H1 (cell line): ENCODE measurements at regions of chr10 and their contacts with region 1.

Region 1: GRCh38 chr10:22573820-22574569 is 140.4 kb downstream of the PIP4K2A start:
- DNase-seq: peak in 1 of 2 experiments; percentile 41
- H3K4me3 ChIP-seq: no peak overlapping the region
- H3K27ac ChIP-seq: no peak overlapping the region
- H3K4me1 ChIP-seq: no peaks in the 10 kb centered on the region
- H3K27me3 ChIP-seq: no peaks in the 10 kb centered on the region
- CTCF ChIP-seq: peak; percentile 11 to 62 (median 49)
- EP300 ChIP-seq: no peak
- POLR2A ChIP-seq: no peak
- RAD21 ChIP-seq: peak; percentile 63 to 66

Region 2: GRCh38 chr10:22606164-22606614 is 32.2 kb after region 1 on chr10:
- CTCF ChIA-PET with region 1: interaction called, 13 read pairs
- POLR2A ChIA-PET with region 1: no interaction called
- DNase-seq: no peak
- H3K4me3 ChIP-seq: no peak overlapping the region
- H3K27ac ChIP-seq: no peak overlapping the region
- H3K4me1 ChIP-seq: peaks cover 0 to 7% (median 5%) of the 10 kb centered on the region in 4 experiments; a peak in 4 of 7 replicates
- H3K27me3 ChIP-seq: no peaks in the 10 kb centered on the region
- CTCF ChIP-seq: no peak
- EP300 ChIP-seq: no peak
- POLR2A ChIP-seq: no peak
- RAD21 ChIP-seq: no peak

Region 3: DNA sequence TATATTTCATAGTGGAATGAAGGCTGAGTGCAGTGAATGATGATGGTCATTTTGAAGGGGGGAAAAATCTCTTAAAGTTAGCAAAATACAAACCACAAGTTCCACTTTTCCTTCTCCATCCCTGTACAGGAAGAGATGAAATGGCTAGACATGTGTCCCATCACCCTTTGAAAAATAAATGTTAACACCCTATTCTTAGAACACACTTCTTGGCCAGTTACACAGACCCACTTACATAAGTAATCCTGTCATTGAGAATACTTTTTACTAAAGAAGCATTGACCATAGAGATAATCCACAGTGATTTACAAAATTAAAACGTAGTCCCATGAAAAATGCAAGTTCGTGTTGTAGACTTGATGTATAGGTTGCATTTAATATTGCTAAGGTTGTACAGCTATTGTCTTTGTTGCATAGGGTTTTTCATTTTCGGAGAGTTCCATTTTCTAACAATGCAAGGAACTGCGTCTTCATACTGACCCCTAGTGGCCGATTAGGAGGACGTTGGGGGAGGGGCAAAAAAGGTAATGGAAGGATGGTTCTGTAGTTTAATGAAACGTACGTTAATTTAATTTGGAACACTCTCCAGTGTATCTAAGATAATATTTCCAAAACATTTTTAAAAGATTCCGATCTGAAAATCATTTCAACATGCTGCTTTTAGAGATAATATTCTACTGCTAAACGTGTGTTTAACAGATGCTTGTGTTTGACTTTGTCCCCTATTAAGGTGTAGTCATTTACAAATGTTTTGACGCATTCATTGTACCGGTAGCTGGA is 414.8 kb after region 1 on chr10:
- CTCF ChIA-PET with region 1: interaction called, 30 read pairs
- POLR2A ChIA-PET with region 1: interaction called, 3 read pairs
- DNase-seq: peak in 1 of 2 experiments; percentile 56
- H3K4me3 ChIP-seq: no peak overlapping the region
- H3K27ac ChIP-seq: no peak overlapping the region
- H3K4me1 ChIP-seq: peaks cover 0 to 5% (median 1%) of the 10 kb centered on the region in 4 experiments; a peak in 2 of 7 replicates
- H3K27me3 ChIP-seq: no peaks in the 10 kb centered on the region
- CTCF ChIP-seq: peak; percentile 36 to 74 (median 71)
- EP300 ChIP-seq: no peak
- POLR2A ChIP-seq: no peak
- RAD21 ChIP-seq: peak; percentile 91 to 93